ENCODE measurements at regions of chr4 and their contacts with region 1.

Region 1: GRCh38 chr4:158729716-158730559 is 6.7 kb upstream of the PPID start:
- DNase-seq: peak; percentile 72
- H3K4me3 ChIP-seq: no peak overlapping the region
- H3K27ac ChIP-seq: no peak overlapping the region
- H3K4me1 ChIP-seq: no peaks in the 10 kb centered on the region
- H3K27me3 ChIP-seq: no peaks in the 10 kb centered on the region
- CTCF ChIP-seq: peak; percentile 91

Region 2: GRCh38 chr4:158410272-158410671 is 319.7 kb before region 1 on chr4:
- intact Hi-C with region 1: no loop called
- DNase-seq: no peak
- H3K4me3 ChIP-seq: no peak overlapping the region
- H3K27ac ChIP-seq: no peak overlapping the region
- H3K4me1 ChIP-seq: no peaks in the 10 kb centered on the region
- H3K27me3 ChIP-seq: no peaks in the 10 kb centered on the region
- CTCF ChIP-seq: no peak

Region 3: GRCh38 chr4:158610790-158611189 is 119.1 kb before region 1 on chr4:
- intact Hi-C with region 1: no loop called
- DNase-seq: no peak
- H3K4me3 ChIP-seq: no peak overlapping the region
- H3K27ac ChIP-seq: no peak overlapping the region
- H3K4me1 ChIP-seq: no peaks in the 10 kb centered on the region
- H3K27me3 ChIP-seq: no peaks in the 10 kb centered on the region
- CTCF ChIP-seq: no peak

Region 4: DNA sequence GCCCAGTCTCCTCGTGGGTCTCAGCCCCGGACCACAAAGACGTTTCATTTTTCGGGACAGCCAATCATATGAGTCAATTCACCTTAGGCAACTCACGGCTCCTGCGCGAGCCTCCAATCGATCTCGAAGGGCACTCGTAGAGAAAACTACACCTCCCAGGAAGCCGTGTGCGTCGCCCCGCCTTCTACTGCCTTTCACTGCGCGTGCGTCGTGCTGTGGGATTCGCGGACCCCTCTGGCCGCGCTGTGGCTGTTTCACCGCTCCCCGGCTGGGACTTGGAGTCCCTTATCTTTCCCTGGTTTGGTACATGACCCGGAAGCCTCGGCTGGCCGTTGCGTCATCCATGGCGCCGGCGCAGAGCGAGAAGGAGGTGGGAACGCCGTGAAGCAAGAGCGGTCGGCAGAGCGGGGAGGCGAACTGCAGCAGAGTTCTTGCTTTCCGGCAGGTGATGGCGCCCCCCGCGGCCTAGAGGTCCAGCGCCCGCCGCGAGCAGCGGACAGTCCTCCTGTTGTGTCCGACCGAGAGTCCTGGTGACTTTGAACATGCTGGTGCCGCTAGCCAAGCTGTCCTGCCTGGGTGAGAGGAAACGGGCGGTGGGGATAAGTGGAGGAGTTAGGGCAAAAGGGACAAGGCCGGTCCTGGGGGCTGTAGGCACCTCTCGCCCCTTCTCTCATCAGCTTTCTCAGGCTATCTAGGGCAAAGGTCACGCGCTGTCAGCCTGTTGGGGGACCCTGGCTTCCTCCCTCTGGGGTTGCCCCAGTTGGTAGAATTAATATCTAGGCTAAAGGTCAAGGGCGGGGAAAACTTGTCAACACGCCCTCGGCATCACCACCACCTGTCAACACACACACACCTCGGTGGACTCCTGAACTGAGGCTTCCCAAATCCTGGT is 57.8 kb before region 1 on chr4 and contains the start of gene ETFDH:
- intact Hi-C with region 1: no loop called
- DNase-seq: peak; percentile 99
- H3K4me3 ChIP-seq: peak within 1 kb of the TSS; percentile 89
- H3K27ac ChIP-seq: peak within 1 kb of the TSS; percentile 95
- H3K4me1 ChIP-seq: peaks cover 8% of the 10 kb centered on the region
- H3K27me3 ChIP-seq: no peaks in the 10 kb centered on the region
- CTCF ChIP-seq: peak; percentile 34
- total RNA-seq, gene ETFDH: 63.7 to 72.9 TPM

Region 5: DNA sequence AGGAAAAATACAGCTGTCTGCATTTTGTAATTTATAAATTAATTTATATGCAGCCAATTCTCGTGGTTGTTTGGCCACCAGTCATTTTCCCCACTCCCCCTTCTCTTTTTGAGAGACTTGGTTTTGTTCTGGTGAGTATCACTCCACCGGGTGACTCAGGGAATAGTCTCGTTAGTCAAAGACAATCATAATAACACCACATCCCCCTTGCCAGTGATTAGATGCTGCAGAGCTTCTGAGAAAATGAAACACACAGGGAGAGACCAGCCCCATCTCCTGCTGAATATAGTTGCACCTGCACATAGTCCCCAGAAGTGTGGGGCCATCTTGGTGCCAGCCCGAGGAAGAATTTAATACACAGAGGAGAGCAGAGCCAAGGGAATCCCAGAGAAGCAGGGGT is 30.9 kb after region 1 on chr4:
- intact Hi-C with region 1: loop called (anchors 5 kb)
- DNase-seq: no peak
- H3K4me3 ChIP-seq: no peak overlapping the region
- H3K27ac ChIP-seq: no peak overlapping the region
- H3K4me1 ChIP-seq: no peaks in the 10 kb centered on the region
- H3K27me3 ChIP-seq: no peaks in the 10 kb centered on the region
- CTCF ChIP-seq: no peak

Region 6: DNA sequence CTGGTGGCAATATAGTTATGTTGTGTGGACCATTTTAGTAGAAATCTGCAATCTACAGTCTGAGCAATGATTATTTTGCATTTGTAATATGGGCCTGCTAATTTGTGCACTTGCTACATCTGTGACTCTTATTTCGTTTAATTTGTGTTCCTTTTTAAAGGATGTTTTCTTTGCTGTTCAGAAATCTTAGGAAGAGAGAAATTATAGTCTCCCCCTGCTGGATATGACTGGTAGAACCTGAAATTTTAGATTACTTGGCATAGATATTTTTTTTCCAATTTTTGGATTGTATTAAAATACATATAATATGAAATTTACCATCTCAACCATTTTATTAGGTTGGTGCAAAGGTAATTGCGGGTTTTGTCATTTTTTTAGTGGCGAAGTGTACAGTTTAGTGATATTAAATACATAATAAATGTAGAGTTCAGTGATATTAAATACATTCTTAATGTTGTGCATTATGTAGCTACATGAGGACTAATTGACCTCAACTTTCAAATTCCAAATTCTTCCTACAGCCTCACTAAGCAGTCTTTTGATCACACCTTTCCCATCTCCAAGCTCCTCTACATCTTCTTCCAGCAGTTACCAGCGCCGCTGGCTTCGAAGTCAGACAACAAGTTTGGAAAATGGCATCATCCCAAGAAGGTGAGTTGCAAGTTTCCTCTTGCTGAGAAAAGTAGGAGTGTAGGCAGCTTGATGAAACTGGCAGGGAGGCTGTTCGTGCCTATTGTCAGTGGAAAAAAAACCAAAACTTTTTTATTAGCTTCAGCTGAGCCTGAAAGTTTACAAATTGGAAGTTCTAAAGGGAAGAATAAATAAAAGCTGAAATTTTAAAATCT is 121.1 kb after region 1 on chr4:
- intact Hi-C with region 1: loop called (anchors 2 kb)
- DNase-seq: no peak
- H3K4me3 ChIP-seq: no peak overlapping the region
- H3K27ac ChIP-seq: no peak overlapping the region
- H3K4me1 ChIP-seq: no peaks in the 10 kb centered on the region
- H3K27me3 ChIP-seq: no peaks in the 10 kb centered on the region
- CTCF ChIP-seq: peak; percentile 68

Measured in colonic mucosa (tissue), 4 donors.